Caco-2 (cell line): ENCODE measurements at regions of chr2 and their contacts with region 1.

Region 1: DNA sequence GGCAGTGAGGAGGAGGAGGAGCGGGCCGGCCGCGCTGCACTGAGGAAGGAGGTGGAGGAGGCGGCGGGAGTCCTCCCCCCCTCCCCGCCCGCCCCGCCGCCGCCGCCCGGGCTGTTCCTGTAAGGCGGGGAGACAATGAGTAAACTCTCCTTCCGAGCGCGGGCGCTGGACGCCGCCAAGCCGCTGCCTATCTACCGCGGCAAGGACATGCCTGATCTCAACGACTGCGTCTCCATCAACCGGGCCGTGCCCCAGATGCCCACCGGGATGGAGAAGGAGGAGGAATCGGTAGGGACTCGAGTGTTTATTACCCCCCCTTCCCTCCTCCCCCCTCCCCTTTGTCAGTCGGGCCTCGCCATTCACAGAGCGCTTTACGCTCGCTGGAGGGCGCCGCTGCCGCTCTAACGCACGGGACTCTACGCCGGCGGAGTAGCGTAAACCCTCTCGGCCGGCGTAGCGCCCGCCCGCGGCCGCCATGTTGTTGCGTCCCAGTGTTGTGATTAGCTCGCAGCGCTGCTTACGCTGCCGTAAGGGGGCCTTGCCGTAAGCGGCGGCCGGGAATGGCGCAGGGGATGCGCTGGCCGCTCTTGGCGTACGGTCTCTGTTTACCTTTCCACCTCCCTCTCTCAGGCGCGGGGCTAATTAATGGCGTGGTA is 460 bp downstream of the EPC2 start:
- DNase-seq: peak; percentile 87 to 91
- H3K4me3 ChIP-seq: peak overlapping the region; percentile 58
- H3K4me3 Mint-ChIP-seq: peak overlapping the region; percentile 97
- H3K27ac Mint-ChIP-seq: peak overlapping the region; percentile 99
- H3K4me1 ChIP-seq: no peaks in the 10 kb centered on the region
- H3K4me1 Mint-ChIP-seq: peaks cover 16% of the 10 kb centered on the region
- H3K27me3 ChIP-seq: no peaks in the 10 kb centered on the region
- H3K27me3 Mint-ChIP-seq: no peaks in the 10 kb centered on the region
- CTCF ChIP-seq: peak in 1 of 2 experiments; percentile 45

Region 2: GRCh38 chr2:148020111-148021058 is 624.6 kb before region 1 on chr2 and contains the start of gene ORC4:
- CTCF ChIA-PET with region 1: interaction called, 4 read pairs
- POLR2A ChIA-PET with region 1: no interaction called
- intact Hi-C with region 1: loop called (anchors 10 kb)
- DNase-seq: peak; percentile 98 to 100
- H3K4me3 ChIP-seq: peak within 1 kb of the TSS; percentile 84
- H3K4me3 Mint-ChIP-seq: peak within 1 kb of the TSS; percentile 89
- H3K27ac Mint-ChIP-seq: peak within 1 kb of the TSS; percentile 85
- H3K4me1 ChIP-seq: peaks cover 6% of the 10 kb centered on the region; the same call in 1 of the 2 replicates
- H3K4me1 Mint-ChIP-seq: peaks cover 15% of the 10 kb centered on the region
- H3K27me3 ChIP-seq: no peaks in the 10 kb centered on the region
- H3K27me3 Mint-ChIP-seq: no peaks in the 10 kb centered on the region
- CTCF ChIP-seq: peak; percentile 38 to 73
- total RNA-seq, gene ORC4: 56.3 and 59.9 TPM in 2 replicates

Region 3: DNA sequence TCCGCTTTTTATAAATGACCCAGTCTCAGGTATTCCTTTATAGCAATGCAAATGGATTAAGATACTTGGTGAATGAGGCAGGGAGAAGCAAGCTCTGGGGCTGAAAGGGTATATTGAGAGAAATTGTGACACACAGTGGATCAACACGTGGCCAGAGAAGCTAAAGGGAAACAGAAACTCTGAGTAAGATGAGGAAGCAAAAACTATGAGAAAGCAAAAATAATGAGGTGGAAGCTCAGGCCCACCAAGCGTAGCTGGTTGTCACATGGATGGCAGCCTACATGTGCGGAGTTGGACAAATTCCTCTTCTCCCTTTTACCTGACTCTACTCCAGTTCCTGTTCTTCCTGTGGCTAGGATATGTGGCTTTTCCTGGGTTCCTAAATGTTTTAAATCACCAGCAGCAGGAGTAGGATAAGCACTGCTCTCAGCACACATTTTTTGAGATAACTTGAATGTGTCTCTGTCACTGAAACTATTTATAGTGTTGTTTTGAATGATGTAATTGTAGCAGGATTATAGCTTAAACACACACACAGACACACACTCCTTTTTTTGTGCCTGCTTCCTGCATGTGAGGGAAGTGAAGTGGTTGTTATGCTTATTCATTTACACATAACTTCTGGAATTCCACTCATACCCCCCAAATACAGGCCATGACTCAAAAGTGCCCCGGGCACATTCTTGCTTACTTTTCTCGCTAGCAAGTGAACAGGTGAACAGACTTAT is 30.5 kb before region 1 on chr2:
- CTCF ChIA-PET with region 1: interaction called, 4 read pairs
- POLR2A ChIA-PET with region 1: interaction called, 4 read pairs
- intact Hi-C with region 1: loop called (anchors 1 kb)
- DNase-seq: peak; percentile 80 to 88
- H3K4me3 ChIP-seq: no peak overlapping the region
- H3K4me3 Mint-ChIP-seq: peak overlapping the region; percentile 17
- H3K27ac Mint-ChIP-seq: peak overlapping the region; percentile 84
- H3K4me1 ChIP-seq: peaks cover 29% of the 10 kb centered on the region
- H3K4me1 Mint-ChIP-seq: peaks cover 30% of the 10 kb centered on the region
- H3K27me3 ChIP-seq: no peaks in the 10 kb centered on the region
- H3K27me3 Mint-ChIP-seq: no peaks in the 10 kb centered on the region
- CTCF ChIP-seq: no peak

Region 4: DNA sequence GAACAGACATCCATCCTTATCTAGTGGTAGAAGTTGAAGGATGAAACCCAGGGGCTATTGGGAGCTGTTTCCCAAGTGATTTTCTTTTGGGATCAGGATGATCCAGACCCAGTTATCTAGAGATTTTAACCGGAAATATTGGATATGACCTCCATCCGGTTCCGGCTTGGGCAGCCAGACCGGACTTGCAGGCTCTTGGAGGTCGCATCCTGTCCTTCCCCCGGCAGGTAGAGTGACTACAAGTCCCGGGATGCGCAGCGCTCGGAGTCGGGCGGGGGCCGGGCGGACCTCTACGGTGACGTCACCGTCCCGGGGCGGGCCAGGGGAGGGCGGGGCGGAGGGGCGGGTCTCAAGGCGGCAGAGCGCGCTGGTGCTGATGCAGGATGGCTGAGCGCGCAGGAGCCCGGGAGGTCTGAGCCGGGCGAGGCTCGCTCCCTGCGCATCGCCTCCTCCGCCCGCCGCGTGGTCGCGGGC is 229.9 kb after region 1 on chr2 and contains the start of gene KIF5C:
- CTCF ChIA-PET with region 1: no interaction called
- POLR2A ChIA-PET with region 1: no interaction called
- intact Hi-C with region 1: loop called (anchors 2 kb)
- DNase-seq: peak; percentile 92 to 95
- H3K4me3 ChIP-seq: peak within 1 kb of the TSS; percentile 33
- H3K4me3 Mint-ChIP-seq: peak within 1 kb of the TSS; percentile 74
- H3K27ac Mint-ChIP-seq: no peak within 1 kb of the TSS
- H3K4me1 ChIP-seq: 0 out of 2 replicates have a peak, but pooled peaks cover 6% of the 10 kb centered on the region
- H3K4me1 Mint-ChIP-seq: no peaks in the 10 kb centered on the region
- H3K27me3 ChIP-seq: peaks cover 4% of the 10 kb centered on the region
- H3K27me3 Mint-ChIP-seq: peaks cover 18% of the 10 kb centered on the region
- CTCF ChIP-seq: no peak
- total RNA-seq, gene KIF5C: 1.1 and 1.5 TPM in 2 replicates

Region 5: DNA sequence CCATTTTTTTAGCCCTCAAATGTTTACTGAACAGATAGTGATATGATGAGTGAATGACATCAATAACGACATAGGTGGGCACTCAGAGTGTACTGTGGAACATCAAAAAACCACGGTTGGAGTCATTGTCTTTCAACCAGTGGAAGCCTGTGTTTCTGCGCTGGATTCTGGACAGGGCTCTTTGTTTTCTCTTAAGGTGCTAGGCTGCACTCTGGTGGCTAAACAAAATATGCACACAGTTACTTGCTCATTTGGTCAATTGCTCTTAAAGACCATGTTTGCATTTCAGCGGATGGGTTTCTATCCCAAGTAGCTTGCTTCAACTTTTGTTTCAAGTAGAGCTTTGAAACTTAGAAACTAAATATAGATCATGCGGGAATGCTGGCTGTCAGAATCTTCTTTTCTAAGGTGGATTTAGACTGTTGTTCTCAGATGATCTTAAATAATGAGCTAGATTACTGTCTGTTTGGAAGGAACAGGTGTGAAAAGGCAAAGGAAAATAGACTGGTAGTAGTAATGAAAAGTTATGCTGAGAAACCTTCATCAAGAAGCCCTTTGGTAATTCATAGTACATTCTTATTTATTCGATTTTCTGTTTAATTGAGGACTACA is 345.0 kb after region 1 on chr2:
- CTCF ChIA-PET with region 1: interaction called, 12 read pairs
- POLR2A ChIA-PET with region 1: no interaction called
- intact Hi-C with region 1: loop called (anchors 1 kb)
- DNase-seq: peak; percentile 73 to 75
- H3K4me3 ChIP-seq: no peak overlapping the region
- H3K4me3 Mint-ChIP-seq: no peak overlapping the region
- H3K27ac Mint-ChIP-seq: no peak overlapping the region
- H3K4me1 ChIP-seq: no peaks in the 10 kb centered on the region
- H3K4me1 Mint-ChIP-seq: peaks cover 12% of the 10 kb centered on the region
- H3K27me3 ChIP-seq: 0 out of 2 replicates have a peak, but pooled peaks cover 1% of the 10 kb centered on the region
- H3K27me3 Mint-ChIP-seq: peaks cover 2% of the 10 kb centered on the region
- CTCF ChIP-seq: peak; percentile 71 to 90